ENCODE measurements at regions of chr3 and their contacts with region 1.

Region 1: GRCh38 chr3:193572426-193572908 is 17.8 kb upstream of the ATP13A4 start:
- DNase-seq: peak; percentile 69
- H3K4me3 ChIP-seq: no peak overlapping the region
- H3K27ac ChIP-seq: no peak overlapping the region
- H3K4me1 ChIP-seq: no peaks in the 10 kb centered on the region
- H3K27me3 ChIP-seq: peaks cover 1 to 3% of the 10 kb centered on the region in 2 experiments
- CTCF ChIP-seq: peak; percentile 76 to 77
- POLR2A ChIP-seq: no peak

Region 2: DNA sequence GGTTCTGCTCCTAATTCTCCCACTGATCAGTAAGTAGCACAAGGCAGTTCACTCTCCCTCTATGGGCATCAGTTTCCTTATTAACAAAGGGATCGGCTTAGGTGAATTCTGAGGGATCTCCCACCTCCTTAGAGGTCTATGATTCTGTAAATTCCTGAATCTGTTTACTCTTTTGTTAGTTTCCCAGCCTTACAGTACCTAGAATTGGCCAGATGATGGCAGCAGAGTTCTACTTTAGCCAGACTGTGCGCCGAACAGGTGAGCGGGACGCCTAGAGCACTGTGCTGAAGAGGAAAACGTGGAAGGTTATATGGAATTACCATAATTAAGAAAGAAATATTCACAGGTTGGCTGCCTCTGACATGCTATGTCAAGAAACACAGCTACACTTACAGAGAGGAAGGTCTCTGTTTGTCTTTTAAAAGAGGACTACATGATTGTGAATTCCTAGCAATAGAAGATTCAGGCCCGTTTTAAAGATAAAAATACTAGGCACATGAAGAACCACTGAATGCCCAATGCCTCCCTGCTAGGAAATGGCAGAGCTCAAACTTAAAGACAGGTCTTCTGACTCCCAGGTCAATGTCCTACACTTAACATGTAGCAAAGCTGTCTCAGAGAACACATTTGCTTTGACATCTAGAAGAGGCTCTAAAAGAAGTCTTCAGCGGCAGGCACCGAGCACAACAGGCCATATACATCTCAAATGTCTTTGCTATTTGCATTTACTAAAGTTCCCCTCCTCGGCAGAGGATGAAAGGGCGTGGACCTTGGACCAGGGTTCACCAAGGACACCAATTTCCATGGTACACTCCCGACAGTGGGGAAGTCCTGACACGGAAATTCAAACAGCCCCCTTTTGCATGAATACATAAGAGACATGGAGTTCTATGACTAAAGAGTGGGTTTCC is 1105.0 kb before region 1 on chr3:
- CTCF ChIA-PET with region 1: interaction called, 4 read pairs
- POLR2A ChIA-PET with region 1: no interaction called
- dilution Hi-C with region 1: no loop called
- intact Hi-C with region 1: loop called (anchors 1 kb)
- DNase-seq: peak; percentile 61
- H3K4me3 ChIP-seq: no peak overlapping the region
- H3K27ac ChIP-seq: no peak overlapping the region
- H3K4me1 ChIP-seq: no peaks in the 10 kb centered on the region
- H3K27me3 ChIP-seq: peaks cover 9 to 17% of the 10 kb centered on the region in 2 experiments
- CTCF ChIP-seq: peak; percentile 77
- POLR2A ChIP-seq: no peak

Region 3: GRCh38 chr3:193040836-193041672 is 531.4 kb before region 1 on chr3:
- CTCF ChIA-PET with region 1: interaction called, 16 read pairs
- POLR2A ChIA-PET with region 1: no interaction called
- dilution Hi-C with region 1: no loop called
- intact Hi-C with region 1: loop called (anchors 1 kb)
- DNase-seq: peak; percentile 43
- H3K4me3 ChIP-seq: no peak overlapping the region
- H3K27ac ChIP-seq: no peak overlapping the region
- H3K4me1 ChIP-seq: no peaks in the 10 kb centered on the region
- H3K27me3 ChIP-seq: no peaks in the 10 kb centered on the region
- CTCF ChIP-seq: peak; percentile 15
- POLR2A ChIP-seq: no peak

Region 4: GRCh38 chr3:193190146-193190786 is 382.2 kb before region 1 on chr3:
- CTCF ChIA-PET with region 1: interaction called, 33 read pairs
- POLR2A ChIA-PET with region 1: no interaction called
- dilution Hi-C with region 1: no loop called
- intact Hi-C with region 1: loop called (anchors 1 kb)
- DNase-seq: peak; percentile 56
- H3K4me3 ChIP-seq: no peak overlapping the region
- H3K27ac ChIP-seq: no peak overlapping the region
- H3K4me1 ChIP-seq: no peaks in the 10 kb centered on the region
- H3K27me3 ChIP-seq: peaks cover 0 to 9% of the 10 kb centered on the region in 2 experiments
- CTCF ChIP-seq: peak; percentile 45 to 59
- POLR2A ChIP-seq: no peak

Region 5: GRCh38 chr3:193465992-193466608 is 106.4 kb before region 1 on chr3:
- CTCF ChIA-PET with region 1: interaction called, 21 read pairs
- POLR2A ChIA-PET with region 1: no interaction called
- dilution Hi-C with region 1: no loop called
- intact Hi-C with region 1: loop called (anchors 1 kb)
- DNase-seq: no peak
- H3K4me3 ChIP-seq: no peak overlapping the region
- H3K27ac ChIP-seq: no peak overlapping the region
- H3K4me1 ChIP-seq: peaks cover 5% of the 10 kb centered on the region
- H3K27me3 ChIP-seq: peaks cover 0 to 2% of the 10 kb centered on the region in 2 experiments
- CTCF ChIP-seq: no peak
- POLR2A ChIP-seq: no peak

Region 6: GRCh38 chr3:193605876-193606275 is 33.4 kb after region 1 on chr3:
- CTCF ChIA-PET with region 1: no interaction called
- POLR2A ChIA-PET with region 1: no interaction called
- dilution Hi-C with region 1: no loop called
- intact Hi-C with region 1: no loop called
- DNase-seq: peak; percentile 64
- H3K4me3 ChIP-seq: no peak overlapping the region
- H3K27ac ChIP-seq: no peak overlapping the region
- H3K4me1 ChIP-seq: no peaks in the 10 kb centered on the region
- H3K27me3 ChIP-seq: no peaks in the 10 kb centered on the region
- CTCF ChIP-seq: peak; percentile 69 to 77
- POLR2A ChIP-seq: no peak